GM12878 (cell line): ENCODE measurements at regions of chr7 and their contacts with region 1.

Region 1: DNA sequence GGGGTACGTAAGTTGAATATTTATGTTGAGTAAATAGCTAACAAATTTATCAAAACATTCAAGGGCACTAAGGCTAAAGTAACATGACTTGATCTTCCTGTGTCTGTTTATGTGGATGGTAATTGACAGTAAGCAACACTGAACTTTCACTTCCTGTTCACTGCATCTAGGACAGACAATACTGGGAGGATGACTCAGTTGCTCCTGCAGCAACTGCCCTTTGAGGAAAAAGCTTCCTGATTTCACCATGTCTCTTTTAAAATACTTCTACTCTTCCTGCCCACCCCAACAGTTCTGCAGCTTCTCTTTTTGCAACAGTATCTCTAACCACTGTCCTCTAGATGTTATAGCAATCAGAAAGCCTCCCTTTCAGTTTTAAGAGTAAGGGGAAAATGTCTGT is 76.6 kb upstream of the HGF start:
- DNase-seq: peak; percentile 57
- ATAC-seq: peak; percentile 86
- H3K4me3 ChIP-seq: no peak overlapping the region; the same call in 1 of the 2 replicates
- H3K27ac ChIP-seq: peak overlapping the region; percentile 78
- H3K4me1 ChIP-seq: peaks cover 14% of the 10 kb centered on the region
- H3K27me3 ChIP-seq: no peaks in the 10 kb centered on the region; a peak in 1 of 4 replicates
- CTCF ChIP-seq: no peak
- EP300 ChIP-seq: peak in 1 of 2 experiments; percentile 57; a peak in 1 of 4 replicates
- POLR2A ChIP-seq: no peak
- RAD21 ChIP-seq: no peak

Region 2: GRCh38 chr7:81882086-81882485 is 35.7 kb after region 1 on chr7:
- CTCF ChIA-PET with region 1: no interaction called
- POLR2A ChIA-PET with region 1: no interaction called
- RAD21 ChIA-PET with region 1: no interaction called
- SMC1A ChIA-PET with region 1: interaction called, 4 read pairs
- in situ Hi-C with region 1: no loop called
- intact Hi-C with region 1: loop called (anchors 5 kb)
- DNase-seq: no peak
- ATAC-seq: no peak
- H3K4me3 ChIP-seq: no peak overlapping the region
- H3K27ac ChIP-seq: no peak overlapping the region
- H3K4me1 ChIP-seq: peaks cover 15% of the 10 kb centered on the region
- H3K27me3 ChIP-seq: no peaks in the 10 kb centered on the region
- CTCF ChIP-seq: no peak
- EP300 ChIP-seq: no peak
- POLR2A ChIP-seq: no peak
- RAD21 ChIP-seq: no peak

Region 3: GRCh38 chr7:81925530-81925929 is 79.1 kb after region 1 on chr7:
- CTCF ChIA-PET with region 1: interaction called, 3 read pairs
- POLR2A ChIA-PET with region 1: interaction called, 3 read pairs
- RAD21 ChIA-PET with region 1: interaction called, 7 read pairs
- SMC1A ChIA-PET with region 1: interaction called, 5 read pairs
- in situ Hi-C with region 1: no loop called
- intact Hi-C with region 1: loop called (anchors 2 kb)
- DNase-seq: peak; percentile 46
- ATAC-seq: peak; percentile 86
- H3K4me3 ChIP-seq: no peak overlapping the region
- H3K27ac ChIP-seq: no peak overlapping the region
- H3K4me1 ChIP-seq: peaks cover 14% of the 10 kb centered on the region
- H3K27me3 ChIP-seq: no peaks in the 10 kb centered on the region
- CTCF ChIP-seq: no peak
- EP300 ChIP-seq: peak; percentile 71 to 94
- POLR2A ChIP-seq: no peak
- RAD21 ChIP-seq: no peak